CD4-positive, alpha-beta memory T cell (primary cell): ENCODE measurements at regions of chrX and their contacts with region 1.

Region 1: DNA sequence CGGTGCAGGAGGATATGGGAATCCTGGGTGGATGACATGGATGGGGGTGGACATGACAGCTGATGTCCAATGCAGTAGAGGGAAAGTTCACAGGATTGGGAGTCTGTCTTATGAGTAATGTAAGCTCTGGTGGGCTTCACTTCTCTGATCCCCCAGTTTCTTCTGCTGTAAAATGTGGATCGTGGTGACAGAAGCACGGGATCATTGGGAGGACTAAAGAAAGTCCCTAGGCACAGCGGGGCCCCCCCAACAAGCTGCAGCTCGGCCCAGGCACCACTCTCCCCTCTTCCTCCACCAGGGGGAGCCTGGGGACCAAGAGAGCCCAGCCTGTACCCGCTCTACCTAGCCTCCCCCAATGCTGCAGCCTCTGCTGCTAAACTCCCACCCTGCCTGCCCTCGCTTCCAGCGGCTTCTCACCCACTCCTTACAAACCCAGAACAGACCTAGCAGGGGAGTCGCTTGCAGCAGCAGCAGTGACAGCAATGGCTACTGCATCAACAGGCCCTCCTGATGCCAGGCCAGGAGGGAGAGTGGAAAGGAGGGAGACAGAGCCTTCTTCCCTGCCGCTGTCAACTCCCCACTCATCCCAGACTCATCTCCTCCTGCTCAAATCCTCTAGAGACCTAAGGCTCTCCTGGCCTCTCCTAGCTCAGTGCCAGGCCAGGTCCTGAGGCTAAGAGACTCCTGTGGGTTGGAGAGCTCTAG is 36.1 kb upstream of the IQSEC2 start:
- DNase-seq: peak; percentile 64 to 74 (median 70)
- H3K4me3 ChIP-seq: no peak overlapping the region
- H3K4me3 Mint-ChIP-seq: peak overlapping the region in 3 of 8 donors; percentile 46 to 65 (median 50)
- H3K27ac ChIP-seq: no peak overlapping the region
- H3K27ac Mint-ChIP-seq: no peak overlapping the region
- H3K4me1 ChIP-seq: peaks cover 16% of the 10 kb centered on the region
- H3K4me1 Mint-ChIP-seq: peaks cover 12 to 28% (median 17%) of the 10 kb centered on the region in 4 donors
- H3K27me3 ChIP-seq: peaks cover 8% of the 10 kb centered on the region
- H3K27me3 Mint-ChIP-seq: peaks cover 16 to 20% of the 10 kb centered on the region in 2 donors

Region 2: GRCh38 chrX:53284684-53285447 is 32.7 kb before region 1 on chrX:
- CTCF ChIA-PET with region 1: interaction called, 19 read pairs
- POLR2A ChIA-PET with region 1: interaction called, 4 read pairs
- intact Hi-C with region 1: no loop called
- DNase-seq: peak in 4 of 5 donors; percentile 37 to 52 (median 42)
- H3K4me3 ChIP-seq: no peak overlapping the region
- H3K4me3 Mint-ChIP-seq: peak overlapping the region in 2 of 8 donors; percentile 15 to 62
- H3K27ac ChIP-seq: no peak overlapping the region
- H3K27ac Mint-ChIP-seq: peak overlapping the region in 2 of 7 donors; percentile 63 to 66
- H3K4me1 ChIP-seq: peaks cover 28% of the 10 kb centered on the region
- H3K4me1 Mint-ChIP-seq: peaks cover 9 to 46% (median 33%) of the 10 kb centered on the region in 4 donors
- H3K27me3 ChIP-seq: no peaks in the 10 kb centered on the region
- H3K27me3 Mint-ChIP-seq: no peaks in the 10 kb centered on the region

Region 3: GRCh38 chrX:53433651-53434639 is 116.4 kb after region 1 on chrX and contains the start of gene HSD17B10:
- CTCF ChIA-PET with region 1: interaction called, 38 read pairs
- POLR2A ChIA-PET with region 1: no interaction called
- intact Hi-C with region 1: loop called (anchors 1 kb)
- DNase-seq: peak; percentile 81 to 85 (median 85)
- H3K4me3 ChIP-seq: peak within 1 kb of the TSS; percentile 47 to 72
- H3K4me3 Mint-ChIP-seq: peak within 1 kb of the TSS; percentile 88 to 98 (median 94)
- H3K27ac ChIP-seq: peak within 1 kb of the TSS; percentile 75
- H3K27ac Mint-ChIP-seq: peak within 1 kb of the TSS; percentile 88 to 99 (median 95)
- H3K4me1 ChIP-seq: peaks cover 15% of the 10 kb centered on the region
- H3K4me1 Mint-ChIP-seq: peaks cover 7 to 21% (median 14%) of the 10 kb centered on the region in 4 donors
- H3K27me3 ChIP-seq: no peaks in the 10 kb centered on the region
- H3K27me3 Mint-ChIP-seq: peaks cover 0 to 2% of the 10 kb centered on the region in 2 donors
- total RNA-seq, gene HSD17B10: 32.6 to 32.8 TPM

Region 4: GRCh38 chrX:53481816-53482465 is 164.4 kb after region 1 on chrX:
- CTCF ChIA-PET with region 1: interaction called, 61 read pairs
- POLR2A ChIA-PET with region 1: no interaction called
- intact Hi-C with region 1: loop called (anchors 1 kb)
- DNase-seq: peak; percentile 37 to 51 (median 45)
- H3K4me3 ChIP-seq: no peak overlapping the region
- H3K4me3 Mint-ChIP-seq: no peak overlapping the region
- H3K27ac ChIP-seq: no peak overlapping the region
- H3K27ac Mint-ChIP-seq: no peak overlapping the region
- H3K4me1 ChIP-seq: no peaks in the 10 kb centered on the region
- H3K4me1 Mint-ChIP-seq: peaks cover 0 to 15% (median 0%) of the 10 kb centered on the region in 4 donors
- H3K27me3 ChIP-seq: no peaks in the 10 kb centered on the region
- H3K27me3 Mint-ChIP-seq: peaks cover 2% of the 10 kb centered on the region in 2 donors

Region 5: DNA sequence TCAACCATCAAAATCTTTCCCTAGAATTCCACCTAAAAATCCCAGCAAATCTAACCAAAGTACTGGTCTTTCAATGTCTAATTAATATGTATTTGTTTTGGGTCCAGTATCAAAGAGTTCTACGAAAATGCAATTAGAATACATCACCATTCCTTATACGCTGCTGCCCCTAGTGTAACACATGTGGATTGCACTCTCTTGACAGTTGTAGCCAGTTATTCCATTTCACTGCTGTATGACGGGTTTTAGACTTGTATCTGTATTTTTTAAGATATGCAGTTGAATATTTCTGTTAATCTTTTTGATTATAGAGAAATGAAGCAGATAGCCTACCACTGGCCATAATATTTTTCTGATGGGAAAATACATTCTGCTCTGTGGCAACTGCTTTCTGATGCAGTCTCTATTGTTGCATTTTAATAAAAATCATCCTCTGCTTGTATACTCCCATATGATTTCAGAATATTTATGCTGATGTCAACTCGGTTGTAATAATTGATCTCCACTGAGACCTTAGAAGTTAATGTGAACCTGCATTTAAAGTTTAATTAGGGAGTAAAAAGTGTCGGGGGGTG is 1740.2 kb after region 1 on chrX:
- CTCF ChIA-PET with region 1: no interaction called
- POLR2A ChIA-PET with region 1: no interaction called
- intact Hi-C with region 1: loop called (anchors 5 kb)
- DNase-seq: peak in 4 of 5 donors; percentile 31 to 41 (median 40)
- H3K4me3 ChIP-seq: no peak overlapping the region
- H3K4me3 Mint-ChIP-seq: peak overlapping the region; percentile 64 to 87 (median 74)
- H3K27ac ChIP-seq: no peak overlapping the region
- H3K27ac Mint-ChIP-seq: peak overlapping the region; percentile 24 to 93 (median 74)
- H3K4me1 ChIP-seq: peaks cover 16% of the 10 kb centered on the region
- H3K4me1 Mint-ChIP-seq: peaks cover 8 to 25% (median 15%) of the 10 kb centered on the region in 4 donors
- H3K27me3 ChIP-seq: no peaks in the 10 kb centered on the region
- H3K27me3 Mint-ChIP-seq: no peaks in the 10 kb centered on the region